ENCODE measurements at regions of chr20 and their contacts with region 1.

Region 1: GRCh38 chr20:5529331-5530148 is 212.8 kb upstream of the PROKR2 start:
- DNase-seq: peak; percentile 86
- H3K4me3 ChIP-seq: no peak overlapping the region
- H3K27ac ChIP-seq: no peak overlapping the region
- H3K4me1 ChIP-seq: peaks cover 6% of the 10 kb centered on the region
- CTCF ChIP-seq: peak; percentile 98

Region 2: DNA sequence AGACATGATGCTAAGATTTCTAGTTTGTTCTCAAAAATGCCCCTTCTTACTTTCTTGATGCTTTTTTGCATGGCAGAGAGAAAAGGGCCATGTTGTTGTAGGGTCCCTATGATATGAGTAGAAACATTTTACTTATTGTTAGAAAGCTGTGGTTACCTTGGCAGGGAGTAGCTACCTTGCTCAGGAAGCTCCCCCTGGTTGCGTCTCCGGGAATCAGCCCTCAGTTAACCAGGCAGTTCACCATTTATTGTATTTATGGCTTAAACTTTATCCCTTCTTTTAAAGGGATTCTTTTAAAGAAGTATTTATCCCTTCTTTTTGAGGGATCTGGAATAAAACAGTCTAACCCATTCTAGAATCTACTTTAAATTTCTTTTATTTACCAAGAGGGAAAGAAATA is 98.9 kb before region 1 on chr20:
- CTCF ChIA-PET with region 1: no interaction called
- POLR2A ChIA-PET with region 1: no interaction called
- intact Hi-C with region 1: no loop called
- DNase-seq: no peak
- H3K4me3 ChIP-seq: no peak overlapping the region
- H3K27ac ChIP-seq: no peak overlapping the region
- H3K4me1 ChIP-seq: no peaks in the 10 kb centered on the region
- CTCF ChIP-seq: 0 out of 2 replicates have a peak, but pooled peaks have one; percentile 24

Region 3: DNA sequence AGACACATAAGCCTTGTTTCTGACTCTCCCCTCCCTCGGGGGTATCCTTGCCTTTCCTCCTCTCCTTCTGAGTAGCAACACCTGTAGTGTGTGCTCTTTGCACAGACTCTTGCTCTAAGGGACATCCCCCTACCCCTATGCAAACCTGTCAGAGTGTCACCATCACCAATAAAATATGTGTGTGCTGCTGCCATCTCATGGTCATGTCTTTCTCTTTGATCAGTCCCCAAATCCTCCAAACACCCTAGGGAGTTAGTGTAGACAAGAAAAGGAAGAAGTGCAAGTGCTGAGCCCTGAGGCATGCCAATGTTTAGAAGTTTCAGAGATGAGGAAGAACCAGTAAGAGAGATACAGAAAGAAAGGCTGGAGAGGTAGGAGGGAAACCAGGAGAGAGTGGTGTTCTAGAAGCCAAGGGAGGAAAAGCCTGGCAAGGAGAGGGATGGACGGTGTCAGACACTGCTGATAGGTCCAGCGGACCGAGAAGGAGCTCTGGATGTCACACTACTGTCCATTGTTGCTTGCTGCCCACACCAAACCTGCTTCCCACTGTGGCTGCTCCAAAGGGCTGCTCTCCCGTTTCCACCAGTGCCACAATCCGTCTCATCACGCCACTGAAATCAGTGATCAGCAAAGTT is 404.4 kb after region 1 on chr20:
- CTCF ChIA-PET with region 1: interaction called, 6 read pairs
- POLR2A ChIA-PET with region 1: no interaction called
- intact Hi-C with region 1: loop called (anchors 1 kb)
- DNase-seq: peak; percentile 84
- H3K4me3 ChIP-seq: no peak overlapping the region
- H3K27ac ChIP-seq: no peak overlapping the region
- H3K4me1 ChIP-seq: peaks cover 8% of the 10 kb centered on the region
- CTCF ChIP-seq: peak; percentile 83

Region 4: DNA sequence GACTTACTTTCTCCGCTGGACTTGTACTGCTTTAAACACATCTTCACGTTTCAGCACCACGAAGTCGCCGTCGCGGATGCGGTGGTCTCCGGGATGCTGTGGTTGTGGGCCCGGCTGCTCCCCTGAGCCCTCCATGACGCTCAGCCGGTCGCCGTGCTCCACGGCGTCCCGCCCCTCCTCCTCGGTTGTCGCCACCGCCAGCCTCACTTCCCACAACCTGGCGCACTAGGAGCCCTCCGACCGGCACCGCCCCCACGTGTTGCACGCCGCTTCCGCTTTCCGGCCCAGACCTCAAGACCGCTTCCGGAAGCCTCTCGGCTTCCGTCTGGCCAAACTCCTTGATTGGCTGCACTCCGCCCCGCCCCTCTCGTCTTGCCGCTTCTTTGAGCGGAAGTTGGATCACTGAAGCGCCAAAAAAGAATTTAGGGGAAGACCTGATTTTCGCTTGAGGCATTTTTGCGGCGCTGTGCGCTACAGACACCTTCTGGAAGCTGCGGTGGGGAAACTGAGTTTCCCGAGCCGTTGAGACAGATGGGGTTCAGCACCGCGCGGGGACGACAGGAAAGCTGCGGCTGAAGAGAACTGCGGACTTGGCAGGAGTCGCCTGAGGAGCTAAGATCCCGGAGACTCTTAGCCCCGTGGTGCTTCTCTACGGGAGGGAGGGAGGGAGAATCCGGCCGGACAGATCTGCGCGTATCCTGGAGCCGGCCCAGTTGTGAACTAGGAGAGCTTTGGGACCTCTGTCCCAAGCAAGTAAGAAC is 420.9 kb after region 1 on chr20 and contains the starts of genes MCM8 and TRMT6:
- CTCF ChIA-PET with region 1: interaction called, 4 read pairs
- POLR2A ChIA-PET with region 1: no interaction called
- intact Hi-C with region 1: loop called (anchors 1 kb)
- DNase-seq: peak; percentile 99
- H3K4me3 ChIP-seq: peak within 1 kb of the TSS; percentile 87
- H3K27ac ChIP-seq: peak within 1 kb of the TSS; percentile 72
- H3K4me1 ChIP-seq: peaks cover 16% of the 10 kb centered on the region
- CTCF ChIP-seq: no peak
- total RNA-seq, gene MCM8: 43.7 and 46.3 TPM in 2 replicates
- total RNA-seq, gene TRMT6: 22.5 and 26.4 TPM in 2 replicates

Region 5: DNA sequence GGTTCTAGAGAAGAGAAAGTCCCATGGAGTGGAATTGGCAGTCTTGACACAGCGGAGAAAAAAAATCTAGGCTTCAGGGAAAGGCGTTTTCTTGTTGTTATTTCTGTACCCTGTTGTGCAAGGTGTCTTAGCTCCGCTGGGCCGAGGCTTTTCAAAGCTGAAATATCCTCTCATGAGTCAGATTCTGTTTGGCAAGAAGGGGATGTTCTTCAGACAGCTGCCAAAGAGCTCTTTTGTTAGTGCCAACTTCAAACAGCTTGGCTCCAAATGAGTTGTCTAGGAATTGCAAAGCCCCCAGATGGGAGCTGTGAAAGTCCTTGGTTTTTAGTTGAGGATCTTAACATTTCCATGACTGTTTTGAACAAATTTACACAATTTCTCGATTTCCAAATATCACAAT is 478.7 kb after region 1 on chr20:
- CTCF ChIA-PET with region 1: no interaction called
- POLR2A ChIA-PET with region 1: interaction called, 5 read pairs
- intact Hi-C with region 1: loop called (anchors 1 kb)
- DNase-seq: no peak
- H3K4me3 ChIP-seq: peak overlapping the region; percentile 99
- H3K27ac ChIP-seq: no peak overlapping the region
- H3K4me1 ChIP-seq: peaks cover 31% of the 10 kb centered on the region
- CTCF ChIP-seq: no peak

Region 6: DNA sequence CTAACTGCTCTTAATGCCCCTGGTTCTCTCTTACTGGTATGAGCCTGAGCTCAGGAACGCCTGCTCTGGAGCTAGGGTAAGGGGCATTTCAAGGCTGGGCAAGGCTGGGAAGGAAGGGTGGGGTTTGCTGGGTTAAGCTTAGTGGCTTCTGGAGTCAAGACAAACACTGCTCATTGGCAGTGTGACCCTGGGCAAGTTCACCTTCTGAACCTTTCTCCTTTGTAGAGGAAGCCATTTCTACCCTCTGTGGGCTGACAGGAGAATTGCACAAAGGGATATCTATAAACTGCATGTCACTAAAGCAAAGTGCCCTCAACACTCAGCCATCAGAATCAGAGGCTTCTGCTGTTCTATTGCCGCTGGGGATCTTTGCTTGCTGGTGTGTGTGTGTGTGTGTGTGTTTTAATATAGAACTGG is 544.6 kb after region 1 on chr20:
- CTCF ChIA-PET with region 1: interaction called, 6 read pairs
- POLR2A ChIA-PET with region 1: interaction called, 3 read pairs
- intact Hi-C with region 1: loop called (anchors 1 kb)
- DNase-seq: peak; percentile 57
- H3K4me3 ChIP-seq: no peak overlapping the region
- H3K27ac ChIP-seq: no peak overlapping the region
- H3K4me1 ChIP-seq: no peaks in the 10 kb centered on the region
- CTCF ChIP-seq: peak; percentile 68